Activated CD8-positive, alpha-beta T cell treated with anti-CD3 and anti-CD28 coated beads, Interleukin-2, amount 10 ng/mL, durations not matched to agents 7 days and 5 days (primary cell): ENCODE measurements at regions of chr9 and their contacts with region 1.

Region 1: DNA sequence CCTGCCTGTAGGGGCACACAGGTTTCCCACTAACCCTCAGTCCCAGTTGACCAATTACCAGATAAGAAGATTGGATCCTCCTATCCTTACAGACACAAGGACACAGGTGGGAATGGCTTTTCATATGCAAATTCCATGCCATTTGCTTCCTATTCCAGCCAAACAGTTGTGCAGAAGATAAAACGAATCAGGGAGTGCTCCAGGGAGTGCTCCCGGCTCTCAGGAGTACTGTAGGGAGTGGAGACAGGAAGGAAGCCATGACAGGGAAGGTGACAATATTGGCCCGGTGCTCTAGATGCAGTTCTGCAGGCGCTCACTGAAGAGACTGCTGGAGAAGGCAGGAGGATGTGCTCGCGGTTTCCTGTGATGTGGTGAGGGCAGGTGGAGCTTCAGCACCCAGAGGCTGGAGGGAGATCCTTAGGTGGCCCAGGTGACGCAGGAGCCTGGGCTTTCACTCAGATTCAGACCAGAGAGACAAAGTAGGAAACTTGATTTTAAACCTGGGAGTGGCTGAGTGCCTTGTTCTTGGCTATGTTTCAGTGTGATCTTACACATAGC is 260.0 kb downstream of the AUH start:
- DNase-seq: peak; percentile 97
- ATAC-seq: peak; percentile 92
- H3K4me3 Mint-ChIP-seq: peak overlapping the region; percentile 65
- H3K27ac Mint-ChIP-seq: peak overlapping the region; percentile 94
- H3K4me1 Mint-ChIP-seq: peaks cover 75% of the 10 kb centered on the region
- H3K27me3 Mint-ChIP-seq: no peaks in the 10 kb centered on the region

Region 2: DNA sequence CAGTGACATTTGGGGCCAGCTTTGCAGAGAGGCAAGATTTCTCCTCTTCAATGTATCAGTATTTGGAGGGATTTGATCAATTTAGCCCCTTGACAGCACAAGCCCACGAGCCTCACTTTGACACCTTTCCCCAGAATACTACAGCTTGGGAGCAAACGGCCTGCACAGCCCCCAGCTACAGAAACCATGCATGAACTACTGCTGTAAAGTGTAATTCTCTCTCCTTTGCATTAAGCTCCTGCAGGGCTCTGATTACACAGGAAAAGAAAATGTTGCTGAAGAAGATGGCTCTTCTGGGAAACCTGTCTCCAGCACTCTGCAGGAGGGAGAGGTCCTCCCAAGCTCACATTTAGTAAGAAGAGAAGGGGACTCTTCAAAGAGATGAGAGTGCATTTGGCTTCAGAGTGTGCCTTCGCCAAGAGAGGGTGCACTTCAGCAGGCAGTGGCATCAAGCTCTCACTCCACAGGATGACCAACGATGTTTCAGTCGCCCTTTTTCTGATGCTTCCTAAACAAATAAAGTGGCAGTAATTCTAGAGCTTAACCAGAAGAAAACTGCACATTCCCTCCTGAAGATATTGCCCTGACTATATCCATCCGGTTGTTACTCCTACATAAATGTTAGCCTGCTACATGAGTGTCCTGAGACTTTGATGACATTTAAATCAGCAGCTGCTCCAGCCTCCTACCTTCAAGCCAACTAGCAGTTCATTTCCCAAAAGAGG is 12.1 kb before region 1 on chr9:
- CTCF ChIA-PET with region 1: interaction called, 31 read pairs
- POLR2A ChIA-PET with region 1: interaction called, 3 read pairs
- DNase-seq: peak; percentile 54
- ATAC-seq: no peak
- H3K4me3 Mint-ChIP-seq: no peak overlapping the region
- H3K27ac Mint-ChIP-seq: peak overlapping the region; percentile 48
- H3K4me1 Mint-ChIP-seq: peaks cover 38% of the 10 kb centered on the region
- H3K27me3 Mint-ChIP-seq: no peaks in the 10 kb centered on the region

Region 3: GRCh38 chr9:91150998-91151717 is 49.5 kb after region 1 on chr9:
- CTCF ChIA-PET with region 1: interaction called, 18 read pairs
- POLR2A ChIA-PET with region 1: interaction called, 32 read pairs
- DNase-seq: peak; percentile 76
- ATAC-seq: peak; percentile 86
- H3K4me3 Mint-ChIP-seq: peak overlapping the region; percentile 53
- H3K27ac Mint-ChIP-seq: peak overlapping the region; percentile 95
- H3K4me1 Mint-ChIP-seq: peaks cover 93% of the 10 kb centered on the region
- H3K27me3 Mint-ChIP-seq: no peaks in the 10 kb centered on the region

Region 4: GRCh38 chr9:91193658-91194391 is 92.1 kb after region 1 on chr9:
- CTCF ChIA-PET with region 1: interaction called, 11 read pairs
- POLR2A ChIA-PET with region 1: interaction called, 3 read pairs
- DNase-seq: peak; percentile 93
- ATAC-seq: peak; percentile 79
- H3K4me3 Mint-ChIP-seq: peak overlapping the region; percentile 70
- H3K27ac Mint-ChIP-seq: peak overlapping the region; percentile 95
- H3K4me1 Mint-ChIP-seq: peaks cover 85% of the 10 kb centered on the region
- H3K27me3 Mint-ChIP-seq: no peaks in the 10 kb centered on the region